Naive thymus-derived CD4-positive, alpha-beta T cell (primary cell): ENCODE measurements at regions of chr3 and their contacts with region 1.

Region 1: GRCh38 chr3:10164546-10165393 is at the start of gene IRAK2:
- DNase-seq: peak; percentile 25 to 75 (median 57)
- ATAC-seq: peak; percentile 92
- H3K4me3 ChIP-seq: peak within 1 kb of the TSS; percentile 85
- H3K4me3 Mint-ChIP-seq: peak within 1 kb of the TSS; percentile 79 to 94 (median 86)
- H3K27ac ChIP-seq: peak within 1 kb of the TSS; percentile 68
- H3K27ac Mint-ChIP-seq: peak within 1 kb of the TSS; percentile 2 to 89 (median 68)
- H3K4me1 ChIP-seq: peaks cover 5 to 9% of the 10 kb centered on the region in 2 donors
- H3K4me1 Mint-ChIP-seq: peaks cover 12 to 37% (median 25%) of the 10 kb centered on the region in 7 donors
- H3K27me3 ChIP-seq: no peaks in the 10 kb centered on the region
- H3K27me3 Mint-ChIP-seq: no peaks in the 10 kb centered on the region
- total RNA-seq, gene IRAK2: 1.5 to 4.8 (median 2.3) TPM

Region 2: GRCh38 chr3:10192953-10193691 is 28.4 kb after region 1 on chr3:
- CTCF ChIA-PET with region 1: interaction called, 9 read pairs
- POLR2A ChIA-PET with region 1: interaction called, 4 read pairs
- intact Hi-C with region 1: loop called (anchors 1 to 2 kb)
- DNase-seq: peak in 8 of 9 donors; percentile 35 to 68 (median 62)
- ATAC-seq: peak; percentile 24
- H3K4me3 ChIP-seq: peak overlapping the region; percentile 34
- H3K4me3 Mint-ChIP-seq: peak overlapping the region; percentile 70 to 90 (median 81)
- H3K27ac ChIP-seq: peak overlapping the region; percentile 75
- H3K27ac Mint-ChIP-seq: peak overlapping the region; percentile 90 to 98 (median 97)
- H3K4me1 ChIP-seq: peaks cover 78 to 86% of the 10 kb centered on the region in 2 donors
- H3K4me1 Mint-ChIP-seq: peaks cover 54 to 92% (median 85%) of the 10 kb centered on the region in 7 donors
- H3K27me3 ChIP-seq: no peaks in the 10 kb centered on the region
- H3K27me3 Mint-ChIP-seq: no peaks in the 10 kb centered on the region

Region 3: GRCh38 chr3:10563396-10563795 is 398.6 kb after region 1 on chr3:
- CTCF ChIA-PET with region 1: no interaction called
- POLR2A ChIA-PET with region 1: no interaction called
- intact Hi-C with region 1: no loop called
- DNase-seq: no peak
- ATAC-seq: no peak
- H3K4me3 ChIP-seq: no peak overlapping the region
- H3K4me3 Mint-ChIP-seq: no peak overlapping the region
- H3K27ac ChIP-seq: no peak overlapping the region
- H3K27ac Mint-ChIP-seq: no peak overlapping the region
- H3K4me1 ChIP-seq: no peaks in the 10 kb centered on the region
- H3K4me1 Mint-ChIP-seq: no peaks in the 10 kb centered on the region
- H3K27me3 ChIP-seq: no peaks in the 10 kb centered on the region
- H3K27me3 Mint-ChIP-seq: peaks cover 13 to 40% (median 38%) of the 10 kb centered on the region in 5 donors